AG04450 (cell line): ENCODE measurements at regions of chr11 and their contacts with region 1.

Region 1: DNA sequence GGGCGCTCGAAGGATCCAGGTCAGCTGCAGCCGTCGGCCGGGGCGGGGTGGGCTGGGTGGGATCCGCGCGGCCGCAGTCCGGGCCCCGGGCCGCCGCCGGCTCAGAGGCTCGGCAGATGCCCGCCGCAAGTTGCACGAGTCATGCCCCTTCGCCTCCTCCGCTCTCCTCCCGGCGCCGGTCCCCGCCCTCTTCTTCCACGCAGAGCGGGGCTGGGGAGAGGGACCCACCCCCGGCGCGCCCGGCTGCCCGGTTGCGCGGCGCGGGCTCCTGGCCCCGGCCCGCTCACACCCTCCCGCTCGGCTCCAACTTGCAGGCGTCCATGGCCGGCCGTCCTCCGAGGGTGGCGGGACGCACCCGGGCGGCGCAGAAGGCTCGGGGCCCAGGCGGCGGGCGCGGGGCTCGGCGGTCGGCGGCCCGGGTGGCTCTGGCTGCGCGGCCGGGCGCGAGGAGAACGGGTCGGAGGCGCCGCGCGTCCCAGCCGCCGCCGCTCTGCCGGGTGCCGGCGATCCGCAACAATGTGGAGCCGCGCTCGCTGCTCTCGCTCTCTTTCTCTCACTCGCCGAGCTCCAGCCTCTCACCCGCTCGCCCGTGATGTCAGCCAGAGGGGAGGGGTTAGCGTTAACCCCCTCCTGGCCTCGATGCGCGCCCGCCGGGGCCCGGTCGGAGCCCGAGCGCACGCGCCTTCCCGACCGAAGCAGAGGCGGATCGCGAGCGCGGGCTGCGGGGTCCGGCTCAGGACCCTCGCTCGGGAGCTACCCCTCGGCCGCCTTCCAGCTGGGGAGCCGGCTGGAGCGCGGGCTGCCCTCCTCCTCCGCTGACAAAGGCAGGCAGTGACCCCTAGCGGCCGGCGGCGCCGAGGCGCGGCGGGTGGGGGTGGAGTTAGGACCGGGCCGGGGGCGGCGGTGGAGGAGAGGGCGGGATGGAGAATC is at the start of gene NECTIN1:
- DNase-seq: peak; percentile 55
- H3K4me3 ChIP-seq: peak within 1 kb of the TSS; percentile 72
- H3K27ac ChIP-seq: peak within 1 kb of the TSS; percentile 39
- H3K27me3 ChIP-seq: peaks cover 6% of the 10 kb centered on the region
- CTCF ChIP-seq: peak; percentile 77
- polyA plus RNA-seq, gene NECTIN1: 2.8 and 4.5 TPM in 2 replicates

Region 2: GRCh38 chr11:119481021-119481666 is 247.8 kb before region 1 on chr11:
- CTCF ChIA-PET with region 1: interaction called, 11 read pairs
- POLR2A ChIA-PET with region 1: no interaction called
- DNase-seq: peak; percentile 65
- H3K4me3 ChIP-seq: no peak overlapping the region
- H3K27ac ChIP-seq: no peak overlapping the region
- H3K27me3 ChIP-seq: peaks cover 37% of the 10 kb centered on the region
- CTCF ChIP-seq: peak; percentile 96

Region 3: GRCh38 chr11:119666463-119667131 is 62.3 kb before region 1 on chr11:
- CTCF ChIA-PET with region 1: interaction called, 33 read pairs
- POLR2A ChIA-PET with region 1: interaction called, 8 read pairs
- DNase-seq: peak; percentile 10
- H3K4me3 ChIP-seq: no peak overlapping the region
- H3K27ac ChIP-seq: no peak overlapping the region
- H3K27me3 ChIP-seq: no peaks in the 10 kb centered on the region
- CTCF ChIP-seq: peak; percentile 95

Region 4: DNA sequence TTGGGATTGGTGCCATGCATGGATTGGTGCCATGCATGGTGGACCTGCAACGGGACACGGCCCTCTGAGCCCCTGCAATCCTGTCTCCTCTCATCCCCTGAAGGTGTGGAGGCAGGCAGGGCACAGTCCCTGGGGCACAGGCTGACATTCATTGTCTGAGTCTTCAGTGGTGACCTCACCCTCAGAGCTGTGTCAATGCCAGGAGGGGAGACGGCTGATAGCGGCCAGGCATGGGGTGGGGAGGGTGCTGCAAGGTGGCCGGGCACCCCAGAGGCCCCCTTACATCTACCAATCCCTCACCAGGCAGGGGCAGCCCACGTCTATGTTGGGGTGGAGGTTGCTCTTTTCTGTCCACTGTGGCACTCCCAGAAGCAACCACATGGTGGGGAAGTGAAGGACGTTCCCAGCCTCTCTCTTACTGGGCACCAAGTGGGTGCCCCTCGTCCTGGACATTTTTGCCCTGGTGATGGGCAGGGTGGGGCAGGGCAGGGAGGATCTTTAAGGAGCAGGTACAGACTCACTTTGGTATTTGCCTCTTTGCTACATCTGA is 47.5 kb before region 1 on chr11:
- CTCF ChIA-PET with region 1: interaction called, 15 read pairs
- POLR2A ChIA-PET with region 1: no interaction called
- DNase-seq: no peak
- H3K4me3 ChIP-seq: no peak overlapping the region
- H3K27ac ChIP-seq: no peak overlapping the region
- H3K27me3 ChIP-seq: no peaks in the 10 kb centered on the region
- CTCF ChIP-seq: no peak

Region 5: DNA sequence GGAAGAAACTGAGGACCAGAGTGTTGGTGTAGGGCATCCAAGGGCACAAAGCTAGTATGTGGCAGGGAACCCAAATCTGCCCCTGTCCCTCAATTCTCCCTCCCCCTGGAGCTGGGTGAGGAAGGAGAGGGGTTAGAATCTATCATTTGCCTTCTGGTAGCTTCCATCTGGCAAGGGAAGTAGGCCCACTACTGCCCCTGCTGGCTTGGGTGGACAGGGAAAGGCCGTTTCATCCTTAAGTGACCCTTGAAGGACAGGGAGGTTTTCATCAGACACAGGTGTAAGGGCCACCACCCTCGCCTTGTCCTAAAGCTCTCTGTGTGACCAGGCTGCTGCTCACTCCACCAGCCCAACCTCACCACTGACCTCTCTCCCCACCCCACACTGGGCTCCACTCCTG is 22.0 kb before region 1 on chr11:
- CTCF ChIA-PET with region 1: interaction called, 10 read pairs
- POLR2A ChIA-PET with region 1: no interaction called
- DNase-seq: no peak
- H3K4me3 ChIP-seq: no peak overlapping the region
- H3K27ac ChIP-seq: no peak overlapping the region
- H3K27me3 ChIP-seq: no peaks in the 10 kb centered on the region
- CTCF ChIP-seq: 0 out of 2 replicates have a peak, but pooled peaks have one; percentile 21

Region 6: GRCh38 chr11:119750056-119750455 is 21.1 kb after region 1 on chr11:
- CTCF ChIA-PET with region 1: interaction called, 11 read pairs
- POLR2A ChIA-PET with region 1: no interaction called
- DNase-seq: no peak
- H3K4me3 ChIP-seq: no peak overlapping the region
- H3K27ac ChIP-seq: no peak overlapping the region
- H3K27me3 ChIP-seq: peaks cover 36% of the 10 kb centered on the region
- CTCF ChIP-seq: no peak